Psoas muscle (tissue), 8 donors: ENCODE measurements at regions of chr3 and their contacts with region 1.

Region 1: GRCh38 chr3:129824926-129825541 is 68.5 kb downstream of the TMCC1 start:
- DNase-seq: no peak
- ATAC-seq: peak in 3 of 4 donors; percentile 56 to 72 (median 70)
- H3K4me3 ChIP-seq: no peak overlapping the region
- H3K27ac ChIP-seq: no peak overlapping the region
- H3K4me1 ChIP-seq: peaks cover 34% of the 10 kb centered on the region
- H3K27me3 ChIP-seq: no peaks in the 10 kb centered on the region
- CTCF ChIP-seq: peak; percentile 72

Region 2: DNA sequence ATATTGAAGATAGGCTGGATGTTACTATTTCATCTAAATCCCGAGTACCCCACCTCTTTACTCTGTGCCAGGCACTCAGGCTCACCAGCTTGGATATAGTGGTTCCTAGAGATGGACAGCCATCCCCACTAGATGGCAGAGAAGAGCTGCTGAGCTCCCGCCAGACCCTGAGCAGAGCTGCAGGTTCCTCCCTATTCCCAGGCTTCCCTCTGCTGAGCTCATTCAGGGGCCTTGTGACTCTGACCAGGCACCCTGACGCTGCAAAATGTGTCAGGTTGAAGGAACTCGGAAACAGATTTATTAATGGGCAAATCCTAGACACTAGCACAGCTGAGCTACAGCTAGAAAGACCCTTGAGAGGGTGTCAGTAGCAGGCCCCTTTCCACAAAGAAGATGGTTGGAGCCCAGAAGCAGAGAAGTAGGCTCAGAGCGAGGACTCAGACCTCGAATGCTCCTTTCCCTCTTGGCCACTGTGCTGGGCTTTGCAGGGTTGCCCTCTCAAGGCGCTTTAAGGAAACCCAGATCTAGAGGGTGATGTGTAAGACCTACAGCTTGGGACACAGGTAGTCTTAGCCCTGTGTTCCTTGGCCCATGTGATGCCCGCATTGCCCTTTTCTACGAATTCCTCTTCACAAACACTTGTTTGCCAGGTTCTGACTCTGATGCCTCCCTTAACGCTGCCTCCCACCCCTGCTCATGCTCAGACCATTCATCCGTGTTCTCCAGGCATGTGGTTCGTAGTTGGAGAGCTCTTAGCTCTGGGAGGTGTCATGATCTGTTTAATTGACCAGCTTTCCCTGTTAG is 334.6 kb before region 1 on chr3:
- intact Hi-C with region 1: loop called (anchors 2 to 5 kb)
- DNase-seq: peak; percentile 81 to 88
- ATAC-seq: peak; percentile 87
- H3K4me3 ChIP-seq: no peak overlapping the region
- H3K27ac ChIP-seq: peak overlapping the region; percentile 72
- H3K4me1 ChIP-seq: peaks cover 37% of the 10 kb centered on the region
- H3K27me3 ChIP-seq: no peaks in the 10 kb centered on the region
- CTCF ChIP-seq: peak; percentile 88

Region 3: DNA sequence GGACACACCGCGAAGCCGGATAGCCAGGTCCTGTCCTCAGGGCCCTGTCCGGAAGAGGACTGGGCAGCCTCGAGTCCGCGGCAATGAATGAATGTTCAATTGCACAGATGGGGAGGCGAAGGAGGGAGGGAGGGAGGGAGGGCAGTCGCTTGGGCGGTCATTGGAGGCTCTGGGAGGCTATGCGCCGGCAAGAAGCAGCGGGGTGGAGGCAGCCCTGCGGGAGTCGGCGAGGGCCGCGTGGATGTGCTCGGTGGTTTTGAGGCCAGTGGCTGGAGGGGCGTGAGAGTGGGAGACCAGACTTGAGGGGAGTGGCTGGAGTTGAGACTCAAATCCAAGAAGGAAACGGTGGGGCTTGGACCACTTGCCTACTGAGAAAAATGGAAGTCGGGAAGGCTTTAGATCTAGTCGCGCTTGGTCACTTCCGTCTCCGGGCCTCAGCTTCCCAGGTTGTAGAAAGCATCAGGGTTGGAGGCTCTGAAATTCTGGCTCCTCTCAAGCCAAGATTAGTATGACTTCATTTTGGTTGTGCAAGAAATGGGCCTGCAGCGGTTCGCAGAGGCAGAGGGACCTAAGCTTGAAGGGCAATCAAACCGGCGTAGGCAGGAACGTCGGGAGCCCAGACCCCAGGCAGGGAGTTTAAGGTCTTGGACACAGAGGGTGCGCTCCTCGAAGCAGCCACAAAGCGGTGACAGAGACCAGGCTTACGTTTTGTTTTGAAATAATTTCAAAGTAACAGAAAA is 197.4 kb before region 1 on chr3:
- intact Hi-C with region 1: loop called (anchors 1 to 5 kb)
- DNase-seq: peak; percentile 65 to 84
- ATAC-seq: peak; percentile 50 to 70 (median 61)
- H3K4me3 ChIP-seq: peak overlapping the region; percentile 76
- H3K27ac ChIP-seq: peak overlapping the region; percentile 91
- H3K4me1 ChIP-seq: peaks cover 23% of the 10 kb centered on the region
- H3K27me3 ChIP-seq: no peaks in the 10 kb centered on the region
- CTCF ChIP-seq: peak; percentile 87

Region 4: GRCh38 chr3:129650256-129650872 is 174.7 kb before region 1 on chr3:
- intact Hi-C with region 1: loop called (anchors 1 to 2 kb)
- DNase-seq: peak; percentile 66 to 72
- ATAC-seq: peak; percentile 53 to 81 (median 71)
- H3K4me3 ChIP-seq: no peak overlapping the region
- H3K27ac ChIP-seq: no peak overlapping the region
- H3K4me1 ChIP-seq: peaks cover 44% of the 10 kb centered on the region
- H3K27me3 ChIP-seq: no peaks in the 10 kb centered on the region
- CTCF ChIP-seq: peak; percentile 64

Region 5: DNA sequence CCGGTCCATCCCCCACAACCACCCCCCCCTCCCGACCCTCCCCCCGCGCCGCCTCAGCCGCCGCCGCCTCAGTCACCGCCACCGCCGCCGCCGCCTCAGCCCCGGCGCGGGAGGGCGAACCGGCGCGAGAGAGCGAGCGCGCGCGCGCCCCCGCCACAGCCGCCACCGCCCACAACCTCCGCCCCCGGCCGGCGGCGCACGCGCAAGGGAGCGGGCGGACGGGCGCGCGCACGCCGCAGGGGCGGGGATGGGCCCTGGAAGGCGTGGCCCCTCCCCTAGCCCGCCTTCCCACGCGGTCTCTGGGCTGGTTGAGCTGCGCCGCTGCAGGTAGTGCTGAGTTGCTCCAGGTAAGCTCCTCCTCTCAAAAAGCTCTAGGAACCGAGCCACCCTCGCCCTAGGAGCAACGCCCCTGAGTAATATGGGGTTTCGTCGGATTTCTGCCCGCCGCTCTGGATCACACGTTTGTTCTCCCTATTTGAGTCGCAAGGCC is 68.6 kb after region 1 on chr3 and contains the start of gene TMCC1:
- intact Hi-C with region 1: loop called in 1 of 2 experiments (anchors 5 kb)
- DNase-seq: peak; percentile 88 to 92
- ATAC-seq: peak; percentile 89 to 93 (median 92)
- H3K4me3 ChIP-seq: peak within 1 kb of the TSS; percentile 95
- H3K27ac ChIP-seq: peak within 1 kb of the TSS; percentile 98
- H3K4me1 ChIP-seq: peaks cover 43% of the 10 kb centered on the region
- H3K27me3 ChIP-seq: no peaks in the 10 kb centered on the region
- CTCF ChIP-seq: no peak
- total RNA-seq, gene TMCC1: 38.1 to 55.0 (median 44.9) TPM